Astrocyte of the cerebellum (primary cell): ENCODE measurements at regions of chr12 and their contacts with region 1.

Region 1: DNA sequence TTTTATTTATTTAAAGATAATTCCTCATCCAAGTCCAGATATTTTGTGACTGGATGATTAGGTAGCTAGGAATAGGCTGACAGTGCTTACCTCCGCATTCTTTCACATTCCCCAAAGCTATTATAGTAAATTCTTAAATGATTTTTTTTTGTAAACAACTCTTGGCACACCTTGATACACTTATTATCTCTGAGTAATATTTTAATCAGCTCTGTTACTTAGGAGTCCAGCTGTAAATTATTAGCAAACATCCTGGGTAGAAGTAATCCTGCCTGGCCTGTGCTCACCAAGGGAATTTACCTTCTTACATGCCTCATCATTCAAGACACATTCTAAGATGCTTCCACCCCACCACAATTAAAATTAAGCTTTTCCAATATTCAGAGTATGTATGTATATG is 186.1 kb downstream of the SLC2A13 start:
- DNase-seq: no peak
- H3K4me3 ChIP-seq: no peak overlapping the region
- CTCF ChIP-seq: no peak

Region 2: DNA sequence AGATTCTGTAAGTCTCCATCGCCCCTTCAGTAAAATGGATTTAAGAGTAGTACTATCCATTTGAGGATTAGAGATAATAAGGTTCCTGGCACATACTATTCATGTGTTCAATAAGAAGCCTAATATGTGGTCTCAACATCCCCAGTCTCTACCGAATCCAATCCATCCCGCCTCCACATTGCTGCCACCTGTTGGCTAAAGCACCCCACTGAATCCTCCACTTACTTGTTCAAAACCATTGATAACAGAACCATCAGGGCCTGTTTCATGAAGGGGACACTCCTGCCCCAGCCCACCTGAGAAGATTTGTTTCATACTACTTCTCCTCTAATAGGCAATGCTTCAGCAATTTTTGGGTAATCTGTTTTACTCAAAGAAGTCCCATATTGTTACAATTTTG is 38.6 kb after region 1 on chr12:
- in situ Hi-C with region 1: no loop called
- DNase-seq: no peak
- H3K4me3 ChIP-seq: no peak overlapping the region
- CTCF ChIP-seq: no peak

Region 3: GRCh38 chr12:40016980-40017379 is 97.2 kb after region 1 on chr12:
- in situ Hi-C with region 1: loop called (anchors 5 kb)
- DNase-seq: no peak
- H3K4me3 ChIP-seq: no peak overlapping the region
- CTCF ChIP-seq: no peak